Endothelial cell of umbilical vein (primary cell): ENCODE measurements at regions of chr17 and their contacts with region 1.

Region 1: GRCh38 chr17:43483674-43484372 is at the start of gene DHX8:
- DNase-seq: peak; percentile 99
- H3K4me3 ChIP-seq: peak within 1 kb of the TSS; percentile 53 to 89 (median 83)
- H3K27ac ChIP-seq: peak within 1 kb of the TSS; percentile 42
- H3K4me1 ChIP-seq: peaks cover 11% of the 10 kb centered on the region
- H3K27me3 ChIP-seq: no peaks in the 10 kb centered on the region
- CTCF ChIP-seq: peak; percentile 100
- POLR2A ChIP-seq: peak; percentile 90
- total RNA-seq, gene DHX8: 52.1 and 65.6 TPM in 2 replicates

Region 2: GRCh38 chr17:43367737-43368242 is 116.0 kb before region 1 on chr17:
- CTCF ChIA-PET with region 1: interaction called, 47 read pairs
- POLR2A ChIA-PET with region 1: interaction called, 36 read pairs
- dilution Hi-C with region 1: no loop called
- intact Hi-C with region 1: loop called (anchors 1 kb)
- DNase-seq: no peak
- H3K4me3 ChIP-seq: peak overlapping the region in 1 of 3 experiments; percentile 16
- H3K27ac ChIP-seq: peak overlapping the region; percentile 98
- H3K4me1 ChIP-seq: peaks cover 15% of the 10 kb centered on the region
- H3K27me3 ChIP-seq: no peaks in the 10 kb centered on the region
- CTCF ChIP-seq: no peak
- POLR2A ChIP-seq: peak; percentile 100

Region 3: GRCh38 chr17:43393944-43394482 is 89.8 kb before region 1 on chr17:
- CTCF ChIA-PET with region 1: interaction called, 434 read pairs
- POLR2A ChIA-PET with region 1: interaction called, 17 read pairs
- dilution Hi-C with region 1: no loop called
- intact Hi-C with region 1: loop called (anchors 1 kb)
- DNase-seq: peak; percentile 80
- H3K4me3 ChIP-seq: no peak overlapping the region
- H3K27ac ChIP-seq: no peak overlapping the region
- H3K4me1 ChIP-seq: peaks cover 8% of the 10 kb centered on the region
- H3K27me3 ChIP-seq: no peaks in the 10 kb centered on the region
- CTCF ChIP-seq: peak; percentile 80 to 85
- POLR2A ChIP-seq: no peak

Region 4: GRCh38 chr17:43416998-43417891 is 66.6 kb before region 1 on chr17:
- CTCF ChIA-PET with region 1: interaction called, 10 read pairs
- POLR2A ChIA-PET with region 1: no interaction called
- dilution Hi-C with region 1: no loop called
- intact Hi-C with region 1: no loop called
- DNase-seq: no peak
- H3K4me3 ChIP-seq: no peak overlapping the region
- H3K27ac ChIP-seq: no peak overlapping the region
- H3K4me1 ChIP-seq: no peaks in the 10 kb centered on the region
- H3K27me3 ChIP-seq: peaks cover 0 to 7% of the 10 kb centered on the region in 2 experiments
- CTCF ChIP-seq: no peak
- POLR2A ChIP-seq: no peak

Region 5: GRCh38 chr17:43599835-43600234 is 116.0 kb after region 1 on chr17:
- CTCF ChIA-PET with region 1: no interaction called
- POLR2A ChIA-PET with region 1: no interaction called
- dilution Hi-C with region 1: no loop called
- intact Hi-C with region 1: no loop called
- DNase-seq: peak; percentile 12
- H3K4me3 ChIP-seq: no peak overlapping the region
- H3K27ac ChIP-seq: no peak overlapping the region
- H3K4me1 ChIP-seq: no peaks in the 10 kb centered on the region
- H3K27me3 ChIP-seq: no peaks in the 10 kb centered on the region
- CTCF ChIP-seq: no peak
- POLR2A ChIP-seq: no peak

Region 6: DNA sequence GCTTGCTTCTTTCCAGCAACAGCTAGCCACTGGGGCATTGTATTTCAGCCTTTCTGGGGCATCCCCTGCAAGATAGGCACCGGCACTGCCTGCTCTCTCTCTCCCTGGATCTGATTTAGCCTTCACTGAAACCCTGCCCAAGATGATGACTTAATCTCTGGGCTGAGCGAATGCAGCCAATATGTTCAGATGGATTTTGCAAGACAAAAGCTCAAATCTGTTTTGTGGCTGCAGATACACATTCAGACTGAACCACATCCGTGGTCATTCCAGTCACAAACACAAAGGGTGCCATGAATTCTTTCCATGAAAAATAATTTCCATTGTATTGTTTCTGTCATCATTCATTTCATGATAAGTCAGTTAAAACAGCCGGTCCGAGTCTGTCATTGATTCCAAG is 250.6 kb after region 1 on chr17:
- CTCF ChIA-PET with region 1: no interaction called
- POLR2A ChIA-PET with region 1: no interaction called
- dilution Hi-C with region 1: no loop called
- intact Hi-C with region 1: no loop called
- DNase-seq: no peak
- H3K4me3 ChIP-seq: no peak overlapping the region
- H3K27ac ChIP-seq: no peak overlapping the region
- H3K4me1 ChIP-seq: no peaks in the 10 kb centered on the region
- H3K27me3 ChIP-seq: peaks cover 2% of the 10 kb centered on the region in 2 experiments
- CTCF ChIP-seq: no peak
- POLR2A ChIP-seq: no peak